ENCODE measurements at regions of chr12 and their contacts with region 1.

Region 1: GRCh38 chr12:52327052-52327829 is 6.0 kb upstream of the KRT83 start:
- DNase-seq: peak; percentile 91
- H3K4me3 ChIP-seq: no peak overlapping the region
- H3K27ac ChIP-seq: no peak overlapping the region
- H3K4me1 ChIP-seq: peaks cover 0 to 6% of the 10 kb centered on the region in 2 experiments; a peak in 1 of 4 replicates
- H3K27me3 ChIP-seq: no peaks in the 10 kb centered on the region; the same call in 1 of the 2 replicates
- CTCF ChIP-seq: peak; percentile 93
- EP300 ChIP-seq: peak in 1 of 2 experiments; percentile 15; a peak in 1 of 4 replicates
- RAD21 ChIP-seq: peak; percentile 94

Region 2: GRCh38 chr12:52203075-52203921 is 123.9 kb before region 1 on chr12:
- CTCF ChIA-PET with region 1: interaction called, 12 read pairs
- POLR2A ChIA-PET with region 1: interaction called, 4 read pairs
- DNase-seq: peak; percentile 63
- H3K4me3 ChIP-seq: peak overlapping the region in 1 of 2 experiments; percentile 4; a peak in 1 of 4 replicates
- H3K27ac ChIP-seq: peak overlapping the region; percentile 49 to 100
- H3K4me1 ChIP-seq: peaks cover 34 to 84% of the 10 kb centered on the region in 2 experiments
- H3K27me3 ChIP-seq: no peaks in the 10 kb centered on the region
- CTCF ChIP-seq: no peak
- EP300 ChIP-seq: peak in 1 of 2 experiments; percentile 54; a peak in 1 of 4 replicates
- RAD21 ChIP-seq: no peak

Region 3: GRCh38 chr12:52243856-52244614 is 83.2 kb before region 1 on chr12:
- CTCF ChIA-PET with region 1: interaction called, 13 read pairs
- POLR2A ChIA-PET with region 1: no interaction called
- DNase-seq: peak; percentile 60
- H3K4me3 ChIP-seq: no peak overlapping the region
- H3K27ac ChIP-seq: peak overlapping the region; percentile 71 to 91
- H3K4me1 ChIP-seq: peaks cover 23 to 24% of the 10 kb centered on the region in 2 experiments; a peak in 3 of 4 replicates
- H3K27me3 ChIP-seq: no peaks in the 10 kb centered on the region
- CTCF ChIP-seq: no peak
- EP300 ChIP-seq: no peak; a peak in 1 of 4 replicates
- RAD21 ChIP-seq: no peak

Region 4: DNA sequence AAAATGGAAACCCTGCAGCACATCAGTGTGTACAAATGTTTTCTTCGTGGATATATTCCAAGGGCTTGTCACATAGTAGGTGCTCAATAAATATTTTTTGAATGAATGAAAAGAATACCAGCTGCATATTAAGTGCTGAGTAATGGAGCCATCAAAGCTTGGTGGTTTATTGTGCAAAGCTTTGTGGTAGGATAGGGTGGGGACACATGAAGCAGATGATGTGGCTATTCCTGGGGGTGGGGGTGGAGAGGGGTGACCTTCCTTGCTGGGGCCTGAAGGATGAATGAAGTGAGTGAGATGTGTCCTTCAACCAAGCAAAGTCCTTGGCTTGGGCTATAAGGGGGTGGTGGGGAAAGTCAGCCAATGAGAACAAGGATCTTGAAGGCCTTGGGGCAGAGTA is 31.6 kb before region 1 on chr12:
- CTCF ChIA-PET with region 1: interaction called, 22 read pairs
- POLR2A ChIA-PET with region 1: no interaction called
- DNase-seq: no peak
- H3K4me3 ChIP-seq: no peak overlapping the region
- H3K27ac ChIP-seq: no peak overlapping the region
- H3K4me1 ChIP-seq: peaks cover 0 to 4% of the 10 kb centered on the region in 2 experiments; a peak in 1 of 4 replicates
- H3K27me3 ChIP-seq: no peaks in the 10 kb centered on the region
- CTCF ChIP-seq: no peak
- EP300 ChIP-seq: no peak
- RAD21 ChIP-seq: no peak

Region 5: DNA sequence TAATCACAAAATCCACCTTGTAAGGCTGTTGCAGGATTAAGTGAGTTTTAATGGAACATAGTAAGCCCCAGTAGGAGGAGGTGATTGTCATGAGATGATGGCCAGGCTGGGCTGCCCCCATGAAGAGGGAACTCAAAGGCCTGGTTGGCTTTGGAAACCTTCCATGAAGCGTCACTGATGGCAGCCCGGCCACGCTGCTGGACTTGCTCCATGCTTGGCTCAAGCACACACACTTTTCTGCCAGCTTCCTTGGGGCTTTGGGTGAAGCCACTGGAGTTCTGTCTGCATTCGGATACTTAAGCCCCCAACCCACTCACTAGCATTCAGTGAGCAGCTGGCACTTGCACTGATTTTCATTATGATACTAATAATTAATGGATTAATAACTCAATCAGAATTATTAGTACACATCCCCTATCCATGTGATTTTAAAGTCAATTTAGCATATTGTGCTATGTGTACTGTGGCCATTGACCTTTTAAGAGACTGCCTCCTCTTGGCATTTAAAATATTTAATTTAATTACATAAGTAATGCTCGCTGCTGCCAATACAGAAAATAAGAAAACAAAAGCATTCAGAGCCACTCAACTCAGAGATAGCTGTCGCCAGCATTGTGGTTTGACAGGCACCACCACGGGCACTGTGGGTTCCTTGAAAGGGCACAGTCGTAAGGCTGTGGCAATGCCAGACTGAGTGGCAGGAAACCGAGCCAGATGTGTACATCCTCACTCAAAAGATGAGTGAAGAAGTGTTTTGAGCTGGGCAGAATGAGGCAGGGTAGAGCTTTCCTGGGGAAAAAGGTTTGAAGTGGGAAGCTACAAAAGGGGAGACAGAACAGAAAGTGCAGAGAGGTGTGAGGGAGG is 24.2 kb after region 1 on chr12:
- CTCF ChIA-PET with region 1: interaction called, 13 read pairs
- POLR2A ChIA-PET with region 1: no interaction called
- DNase-seq: no peak
- H3K4me3 ChIP-seq: no peak overlapping the region
- H3K27ac ChIP-seq: no peak overlapping the region
- H3K4me1 ChIP-seq: no peaks in the 10 kb centered on the region; a peak in 1 of 4 replicates
- H3K27me3 ChIP-seq: peaks cover 40% of the 10 kb centered on the region
- CTCF ChIP-seq: no peak
- EP300 ChIP-seq: no peak
- RAD21 ChIP-seq: no peak

Region 6: DNA sequence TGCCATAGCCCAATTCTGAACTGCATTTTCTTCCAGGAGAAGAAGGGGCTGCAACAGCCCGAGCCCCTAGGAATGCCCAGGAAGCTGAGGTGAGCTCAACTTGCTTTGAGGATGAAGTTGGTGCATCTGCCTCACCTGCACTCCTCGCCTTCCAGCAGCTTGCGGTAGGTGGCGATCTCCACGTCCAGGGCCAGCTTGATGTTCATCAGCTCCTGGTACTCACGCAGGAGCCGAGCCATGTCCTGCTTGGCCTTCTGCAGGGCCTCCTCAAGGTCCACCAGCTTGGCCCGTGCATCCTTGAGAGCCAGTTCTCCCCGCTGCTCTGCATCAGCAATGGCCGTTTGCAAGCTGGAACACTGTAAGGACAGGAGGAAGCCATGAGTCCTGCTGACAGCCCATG is 100.9 kb after region 1 on chr12:
- CTCF ChIA-PET with region 1: no interaction called
- POLR2A ChIA-PET with region 1: no interaction called
- DNase-seq: no peak
- H3K4me3 ChIP-seq: no peak overlapping the region
- H3K27ac ChIP-seq: no peak overlapping the region
- H3K4me1 ChIP-seq: no peaks in the 10 kb centered on the region
- H3K27me3 ChIP-seq: peaks cover 56% of the 10 kb centered on the region; the same call in 1 of the 2 replicates
- CTCF ChIP-seq: no peak
- EP300 ChIP-seq: no peak
- RAD21 ChIP-seq: no peak

Region 7: GRCh38 chr12:53575502-53576253 is 1248.4 kb after region 1 on chr12:
- CTCF ChIA-PET with region 1: no interaction called
- POLR2A ChIA-PET with region 1: no interaction called
- DNase-seq: no peak
- H3K4me3 ChIP-seq: no peak overlapping the region
- H3K27ac ChIP-seq: no peak overlapping the region
- H3K4me1 ChIP-seq: no peaks in the 10 kb centered on the region
- H3K27me3 ChIP-seq: no peaks in the 10 kb centered on the region
- CTCF ChIP-seq: no peak
- EP300 ChIP-seq: no peak
- RAD21 ChIP-seq: no peak

Measured in SK-N-SH (cell line).